Transverse colon (tissue), 4 donors: ENCODE measurements at regions of chr19 and their contacts with region 1.

Region 1: DNA sequence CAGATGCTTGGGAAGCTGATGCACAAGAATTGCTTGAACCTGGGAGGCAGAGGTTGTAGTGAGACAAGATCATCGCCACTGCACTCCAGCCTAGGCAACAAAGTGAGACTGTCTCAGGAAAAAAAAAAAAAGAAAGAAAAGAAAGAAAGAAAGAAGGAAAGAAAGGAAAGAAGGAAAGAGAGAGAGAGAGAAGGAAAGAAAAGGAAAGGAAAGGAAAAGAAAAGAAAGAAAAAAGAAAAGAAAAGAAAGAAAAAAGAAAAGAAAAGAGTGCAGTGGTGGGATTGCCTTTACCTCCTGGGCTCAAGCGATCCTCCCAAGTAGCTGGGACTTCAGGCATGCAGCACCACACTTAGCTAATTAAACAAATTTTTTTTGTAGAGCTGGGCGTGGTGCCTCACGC is 12.9 kb downstream of the OLFM2 start:
- DNase-seq: no peak
- H3K4me3 ChIP-seq: no peak overlapping the region
- H3K27ac ChIP-seq: no peak overlapping the region
- H3K4me1 ChIP-seq: no peaks in the 10 kb centered on the region
- H3K27me3 ChIP-seq: peaks cover 4% of the 10 kb centered on the region
- CTCF ChIP-seq: no peak
- EP300 ChIP-seq: no peak
- POLR2A ChIP-seq: no peak

Region 2: GRCh38 chr19:10027158-10027693 is 103.8 kb after region 1 on chr19:
- in situ Hi-C with region 1: loop called in 2 of 4 experiments (anchors 5 kb)
- intact Hi-C with region 1: no loop called
- DNase-seq: no peak
- H3K4me3 ChIP-seq: no peak overlapping the region
- H3K27ac ChIP-seq: no peak overlapping the region
- H3K4me1 ChIP-seq: peaks cover 0 to 9% (median 7%) of the 10 kb centered on the region in 4 donors
- H3K27me3 ChIP-seq: peaks cover 23% of the 10 kb centered on the region
- CTCF ChIP-seq: no peak
- EP300 ChIP-seq: no peak
- POLR2A ChIP-seq: no peak

Region 3: GRCh38 chr19:10245189-10245939 is 321.9 kb after region 1 on chr19:
- in situ Hi-C with region 1: loop called in 2 of 4 experiments (anchors 10 kb)
- intact Hi-C with region 1: no loop called
- DNase-seq: no peak
- H3K4me3 ChIP-seq: no peak overlapping the region
- H3K27ac ChIP-seq: no peak overlapping the region
- H3K4me1 ChIP-seq: peaks cover 0 to 6% (median 4%) of the 10 kb centered on the region in 4 donors
- H3K27me3 ChIP-seq: no peaks in the 10 kb centered on the region
- CTCF ChIP-seq: no peak
- EP300 ChIP-seq: no peak
- POLR2A ChIP-seq: no peak